ENCODE measurements at regions of chr16 and their contacts with region 1.

Region 1: DNA sequence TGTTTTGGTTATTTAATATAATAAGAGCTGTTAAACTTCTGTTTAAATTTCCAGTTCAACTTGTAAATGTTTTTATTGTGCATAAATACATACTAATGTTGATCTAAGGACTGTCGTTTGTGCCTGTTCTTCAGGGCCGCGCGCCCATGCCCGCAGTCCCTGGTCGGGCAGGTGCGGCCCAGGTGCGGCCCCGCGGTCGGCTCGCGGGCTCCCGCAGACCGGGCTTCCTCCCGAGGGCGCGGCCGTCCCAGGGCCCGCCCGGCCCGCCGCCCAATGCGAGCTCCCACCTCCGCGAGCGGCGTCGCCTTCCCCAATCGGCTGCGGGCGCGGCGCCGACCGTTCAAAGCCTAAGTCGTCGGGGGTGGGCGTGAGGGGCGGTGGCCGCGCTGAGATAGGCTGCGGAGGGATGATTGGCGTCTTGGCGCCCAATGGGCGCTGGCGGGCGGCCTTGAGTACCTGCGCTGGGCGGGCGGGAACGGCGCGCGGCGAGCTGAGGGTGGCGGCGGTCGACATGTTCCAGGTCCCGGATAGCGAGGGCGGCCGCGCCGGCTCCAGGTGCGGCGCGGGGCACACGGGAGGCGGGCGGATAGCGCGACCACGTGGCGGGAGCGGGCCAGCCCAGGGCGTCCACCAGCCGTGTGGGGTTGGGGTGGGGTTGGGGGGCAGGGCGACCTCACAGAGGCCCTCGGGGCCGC is at the start of gene JPT2:
- DNase-seq: peak; percentile 98
- ATAC-seq: peak; percentile 94
- H3K4me3 ChIP-seq: peak within 1 kb of the TSS; percentile 38 to 77 (median 60)
- H3K4me3 Mint-ChIP-seq: peak within 1 kb of the TSS; percentile 89
- H3K27ac ChIP-seq: peak within 1 kb of the TSS in 1 of 2 donors; percentile 83
- H3K27ac Mint-ChIP-seq: peak within 1 kb of the TSS; percentile 88
- H3K4me1 ChIP-seq: peaks cover 8 to 14% of the 10 kb centered on the region in 2 donors
- H3K4me1 Mint-ChIP-seq: peaks cover 14% of the 10 kb centered on the region
- H3K27me3 ChIP-seq: no peaks in the 10 kb centered on the region
- H3K27me3 Mint-ChIP-seq: no peaks in the 10 kb centered on the region
- CTCF ChIP-seq: no peak
- total RNA-seq, gene JPT2: 42.1 and 45.7 TPM in 2 replicates

Region 2: DNA sequence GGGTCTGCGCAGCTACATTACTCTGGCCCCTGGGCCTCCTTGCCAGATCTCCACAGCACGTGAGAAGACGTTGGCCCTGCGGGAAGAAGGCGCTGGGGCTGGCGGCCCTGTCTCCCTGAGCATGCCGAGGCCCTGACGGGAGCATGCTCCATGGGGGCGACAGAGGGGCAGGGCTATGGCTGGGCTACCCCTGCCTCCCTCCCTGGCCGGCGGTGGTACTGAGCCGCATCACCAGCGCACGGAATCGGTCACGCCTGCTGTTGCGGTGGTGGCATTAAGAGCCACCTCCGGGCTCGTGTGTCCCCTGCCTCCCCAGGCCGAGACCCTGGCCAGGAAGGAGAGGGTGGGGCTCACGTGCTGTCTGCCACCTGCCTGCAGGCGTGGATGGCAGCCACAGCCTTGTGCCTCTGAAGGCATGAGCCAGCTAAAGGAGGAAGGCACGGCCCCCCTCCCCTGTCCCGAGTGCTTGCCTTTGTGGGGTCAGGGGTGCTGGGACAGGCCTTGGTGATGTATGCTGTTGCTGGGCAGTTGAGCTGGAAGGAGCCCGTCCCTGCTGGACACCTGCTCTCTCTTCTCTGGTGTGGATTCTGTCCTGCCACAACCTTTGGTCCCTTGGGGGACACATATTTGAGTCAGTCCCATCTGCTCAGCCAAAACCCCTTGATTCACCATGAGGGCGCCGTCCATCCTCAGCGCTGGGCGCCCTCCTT is 56.3 kb after region 1 on chr16:
- CTCF ChIA-PET with region 1: no interaction called
- POLR2A ChIA-PET with region 1: no interaction called
- intact Hi-C with region 1: no loop called
- DNase-seq: no peak
- ATAC-seq: no peak
- H3K4me3 ChIP-seq: no peak overlapping the region
- H3K4me3 Mint-ChIP-seq: no peak overlapping the region
- H3K27ac ChIP-seq: no peak overlapping the region
- H3K27ac Mint-ChIP-seq: no peak overlapping the region
- H3K4me1 ChIP-seq: no peaks in the 10 kb centered on the region
- H3K4me1 Mint-ChIP-seq: no peaks in the 10 kb centered on the region
- H3K27me3 ChIP-seq: no peaks in the 10 kb centered on the region
- H3K27me3 Mint-ChIP-seq: no peaks in the 10 kb centered on the region
- CTCF ChIP-seq: no peak

Region 3: DNA sequence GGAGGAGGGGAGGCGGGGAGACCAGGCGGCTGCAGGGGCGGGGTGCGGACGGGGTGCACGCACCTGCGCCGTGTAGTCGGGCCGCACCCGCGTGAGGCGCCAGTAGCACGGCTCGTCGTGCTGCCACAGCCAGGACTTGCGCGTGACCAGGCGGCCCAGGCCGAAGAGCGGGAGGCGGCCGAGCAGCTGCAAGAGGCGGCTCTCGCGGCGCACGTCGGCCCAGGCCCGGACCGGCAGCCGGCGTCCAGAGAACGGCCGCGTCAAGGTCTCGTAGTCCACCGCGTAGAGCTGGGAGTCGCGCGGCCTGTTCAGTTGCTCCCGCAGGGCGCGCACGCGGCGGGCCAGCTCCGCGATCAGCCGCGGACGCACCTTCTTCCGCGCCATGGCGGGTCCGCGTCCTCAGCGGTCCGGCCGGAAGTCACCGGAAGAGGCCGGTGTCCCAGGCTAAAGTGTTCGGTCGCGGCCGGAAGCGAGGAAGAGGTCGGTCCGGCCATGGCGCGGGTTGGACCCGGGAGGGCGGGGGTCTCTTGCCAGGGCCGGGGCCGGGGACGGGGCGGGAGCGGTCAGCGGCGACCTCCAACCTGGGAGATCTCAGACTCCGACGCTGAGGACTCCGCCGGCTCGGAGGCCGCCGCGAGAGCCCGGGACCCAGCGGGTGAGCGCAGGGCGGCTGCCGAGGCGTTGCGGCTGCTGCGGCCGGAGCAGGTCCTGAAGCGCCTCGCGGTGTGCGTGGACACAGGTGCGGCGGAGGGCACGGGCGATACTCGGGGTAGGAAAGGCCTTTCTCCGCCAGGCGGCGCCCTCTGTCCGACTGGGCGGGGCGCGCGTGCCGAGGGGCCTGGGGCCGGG is 95.0 kb after region 1 on chr16 and contains the starts of genes EME2 and MRPS34:
- CTCF ChIA-PET with region 1: no interaction called
- POLR2A ChIA-PET with region 1: interaction called, 3 read pairs
- intact Hi-C with region 1: loop called (anchors 1 kb)
- DNase-seq: peak; percentile 89
- ATAC-seq: peak; percentile 61
- H3K4me3 ChIP-seq: peak within 1 kb of the TSS; percentile 53 to 87 (median 82)
- H3K4me3 Mint-ChIP-seq: peak within 1 kb of the TSS; percentile 95
- H3K27ac ChIP-seq: peak within 1 kb of the TSS; percentile 38 to 90
- H3K27ac Mint-ChIP-seq: peak within 1 kb of the TSS; percentile 97
- H3K4me1 ChIP-seq: peaks cover 22 to 40% of the 10 kb centered on the region in 2 donors
- H3K4me1 Mint-ChIP-seq: peaks cover 27% of the 10 kb centered on the region
- H3K27me3 ChIP-seq: no peaks in the 10 kb centered on the region
- H3K27me3 Mint-ChIP-seq: no peaks in the 10 kb centered on the region
- CTCF ChIP-seq: peak; percentile 88
- total RNA-seq, gene EME2: 42.5 and 43.9 TPM in 2 replicates
- total RNA-seq, gene MRPS34: 44.6 and 54.5 TPM in 2 replicates

Measured in B cell (primary cell).